ENCODE measurements at regions of chr15 and their contacts with region 1.

Region 1: GRCh38 chr15:44663409-44664308 is at the start of gene SPG11:
- DNase-seq: peak; percentile 98 to 99
- H3K4me3 ChIP-seq: peak within 1 kb of the TSS; percentile 61 to 97
- H3K27ac ChIP-seq: peak within 1 kb of the TSS; percentile 87 to 97
- H3K4me1 ChIP-seq: peaks cover 0 to 15% (median 6%) of the 10 kb centered on the region in 4 donors
- H3K27me3 ChIP-seq: no peaks in the 10 kb centered on the region
- CTCF ChIP-seq: peak; percentile 96

Region 2: DNA sequence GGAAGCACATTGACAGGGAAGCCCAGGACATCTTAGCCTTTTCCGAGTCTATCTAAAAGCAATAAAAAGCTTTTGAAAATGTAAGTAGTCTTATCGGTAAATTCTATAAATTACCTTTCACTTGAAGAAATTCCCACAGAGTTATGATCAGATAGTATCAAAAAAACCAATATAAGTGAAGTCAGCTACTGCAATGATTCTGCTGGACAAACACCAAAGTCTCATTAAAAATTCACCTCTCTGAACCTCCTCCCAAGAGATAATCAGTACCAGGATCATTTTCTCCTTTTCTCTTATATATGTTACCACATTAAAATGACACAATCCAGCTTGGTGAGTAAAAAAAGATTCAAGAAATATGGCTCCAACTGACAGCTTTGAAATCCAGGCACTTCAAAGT is 537.8 kb before region 1 on chr15:
- intact Hi-C with region 1: no loop called
- DNase-seq: no peak
- H3K4me3 ChIP-seq: no peak overlapping the region
- H3K27ac ChIP-seq: no peak overlapping the region
- H3K4me1 ChIP-seq: no peaks in the 10 kb centered on the region
- H3K27me3 ChIP-seq: no peaks in the 10 kb centered on the region
- CTCF ChIP-seq: no peak

Region 3: GRCh38 chr15:44711356-44712107 is 47.9 kb after region 1 on chr15 and contains the start of gene B2M:
- intact Hi-C with region 1: loop called (anchors 5 kb)
- DNase-seq: peak; percentile 96 to 98
- H3K4me3 ChIP-seq: peak within 1 kb of the TSS; percentile 86 to 98
- H3K27ac ChIP-seq: peak within 1 kb of the TSS; percentile 97 to 99
- H3K4me1 ChIP-seq: peaks cover 0 to 20% (median 6%) of the 10 kb centered on the region in 4 donors
- H3K27me3 ChIP-seq: no peaks in the 10 kb centered on the region
- CTCF ChIP-seq: no peak

Region 4: DNA sequence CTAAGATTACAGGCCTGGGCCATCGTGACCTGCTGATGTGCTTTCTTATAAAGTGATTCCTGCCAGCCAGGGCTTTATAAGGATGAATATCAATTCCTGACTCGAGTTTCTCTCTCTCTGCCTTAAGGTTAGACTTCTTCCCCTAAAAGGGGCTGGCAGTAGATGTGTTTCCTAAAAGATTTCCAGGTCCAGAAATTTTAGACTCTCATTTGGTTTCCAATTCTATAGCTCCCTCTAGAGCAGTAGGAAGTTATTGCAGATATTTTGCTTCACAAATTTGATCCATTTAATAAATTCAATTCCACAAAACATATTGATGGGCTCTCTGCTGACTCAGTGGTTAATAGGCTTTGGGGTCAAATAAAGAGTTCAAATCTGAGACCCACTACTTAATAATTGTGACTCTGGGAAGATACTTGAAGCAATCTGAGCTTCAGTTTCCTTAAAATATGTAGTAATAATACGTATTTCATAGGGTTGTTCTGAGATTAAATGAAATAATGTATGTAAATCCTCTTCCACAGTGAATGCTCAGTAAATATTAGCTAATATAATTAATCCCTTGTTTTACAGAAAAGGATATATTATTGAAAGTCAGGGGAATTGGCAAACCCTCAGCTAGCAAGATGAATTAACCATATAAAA is 74.8 kb after region 1 on chr15:
- intact Hi-C with region 1: loop called (anchors 5 kb)
- DNase-seq: no peak
- H3K4me3 ChIP-seq: no peak overlapping the region
- H3K27ac ChIP-seq: no peak overlapping the region
- H3K4me1 ChIP-seq: peaks cover 0 to 15% (median 5%) of the 10 kb centered on the region in 4 donors
- H3K27me3 ChIP-seq: no peaks in the 10 kb centered on the region
- CTCF ChIP-seq: peak; percentile 69 to 73